ENCODE measurements at regions of chr2 and their contacts with region 1.

Region 1: DNA sequence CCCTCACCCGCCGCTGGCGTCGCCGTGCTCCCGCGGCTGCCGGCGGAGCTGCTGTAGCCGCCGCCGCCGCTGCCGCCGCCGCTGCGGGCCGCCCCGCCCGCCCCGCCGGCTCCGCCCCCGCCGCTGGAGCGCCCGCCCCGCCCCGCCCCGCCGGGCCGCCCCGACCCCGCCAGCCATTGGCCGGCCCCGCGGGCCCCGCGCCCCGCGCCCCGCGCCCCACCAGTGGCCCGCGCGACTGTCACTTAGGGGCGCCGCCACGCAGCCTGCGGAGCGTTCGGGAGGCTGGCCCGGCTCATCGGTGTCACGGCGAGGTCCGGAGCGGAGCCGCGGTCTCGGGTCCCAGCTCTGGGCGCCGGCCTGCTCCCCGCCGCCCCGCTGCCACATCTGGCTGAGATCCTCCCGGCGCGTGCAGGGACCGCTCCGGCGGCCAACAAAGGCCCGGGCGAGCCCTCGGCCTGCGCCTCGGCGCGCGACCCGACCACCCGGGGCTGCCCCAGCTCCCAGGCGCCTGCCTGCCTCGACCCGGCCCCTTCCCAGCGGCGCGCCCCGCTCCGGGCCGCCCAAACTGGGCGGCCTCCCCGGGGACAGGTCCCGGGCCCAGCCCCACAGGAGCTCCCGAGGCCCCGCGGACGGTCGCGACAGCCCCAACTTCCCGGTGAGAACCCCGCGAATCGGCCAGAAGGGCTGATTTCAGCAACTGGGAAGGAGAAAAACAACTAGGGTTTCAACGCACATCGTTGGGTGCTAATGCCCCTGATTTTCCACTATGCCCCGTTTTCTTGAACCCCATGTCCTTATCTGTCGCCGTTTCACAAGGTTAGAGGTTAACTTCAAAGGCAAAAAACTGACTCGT is at the start of gene MGAT4A:
- DNase-seq: peak; percentile 69
- ATAC-seq: peak; percentile 91
- H3K4me3 ChIP-seq: peak within 1 kb of the TSS; percentile 77 to 97 (median 96)
- H3K27ac ChIP-seq: peak within 1 kb of the TSS; percentile 91
- H3K4me1 ChIP-seq: peaks cover 79% of the 10 kb centered on the region
- H3K27me3 ChIP-seq: no peaks in the 10 kb centered on the region; a peak in 1 of 5 replicates
- CTCF ChIP-seq: no peak
- EP300 ChIP-seq: peak in 1 of 2 experiments; percentile 35; a peak in 1 of 4 replicates
- POLR2A ChIP-seq: peak; percentile 79 to 96
- RAD21 ChIP-seq: peak; percentile 69; the same call in 1 of the 2 replicates
- total RNA-seq, gene MGAT4A: 90.9 and 97.6 TPM in 2 replicates

Region 2: DNA sequence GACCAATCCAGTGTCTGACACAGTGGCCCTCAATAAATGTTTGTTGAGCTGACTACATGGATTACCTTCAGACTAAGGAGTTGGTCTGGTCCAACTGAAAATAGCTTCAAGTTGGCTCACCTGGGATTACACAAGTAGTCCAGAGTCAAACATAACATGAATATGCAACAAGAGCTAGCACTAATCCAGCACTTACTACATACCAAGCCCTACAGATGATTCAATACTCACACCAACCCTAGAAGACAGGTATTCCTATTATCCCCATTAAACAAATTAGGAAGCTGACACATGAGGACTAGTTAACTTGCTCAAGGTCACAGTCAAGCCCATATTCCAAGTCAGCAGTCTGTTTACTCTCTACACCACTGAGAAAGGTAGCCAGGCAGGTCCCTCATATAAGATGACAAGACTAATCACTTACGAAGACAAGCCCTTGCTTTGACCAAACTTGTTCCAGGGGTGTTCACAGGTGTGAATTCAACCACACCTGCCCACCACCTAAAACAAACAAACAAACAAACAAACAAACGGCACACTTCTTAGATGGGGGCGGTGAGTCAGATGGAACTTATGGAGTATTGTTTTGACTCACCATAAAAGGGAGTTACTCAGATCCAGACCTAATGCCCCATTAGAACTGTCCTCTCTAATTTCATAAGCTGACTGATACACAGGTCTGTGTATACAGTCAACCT is 764.6 kb before region 1 on chr2:
- CTCF ChIA-PET with region 1: no interaction called
- POLR2A ChIA-PET with region 1: no interaction called
- in situ Hi-C with region 1: no loop called
- intact Hi-C with region 1: no loop called
- DNase-seq: peak; percentile 25
- ATAC-seq: peak; percentile 9; the same call in 1 of the 3 replicates
- H3K4me3 ChIP-seq: no peak overlapping the region
- H3K27ac ChIP-seq: no peak overlapping the region
- H3K4me1 ChIP-seq: peaks cover 55% of the 10 kb centered on the region
- H3K27me3 ChIP-seq: no peaks in the 10 kb centered on the region
- CTCF ChIP-seq: no peak
- EP300 ChIP-seq: no peak
- POLR2A ChIP-seq: no peak
- RAD21 ChIP-seq: no peak

Region 3: DNA sequence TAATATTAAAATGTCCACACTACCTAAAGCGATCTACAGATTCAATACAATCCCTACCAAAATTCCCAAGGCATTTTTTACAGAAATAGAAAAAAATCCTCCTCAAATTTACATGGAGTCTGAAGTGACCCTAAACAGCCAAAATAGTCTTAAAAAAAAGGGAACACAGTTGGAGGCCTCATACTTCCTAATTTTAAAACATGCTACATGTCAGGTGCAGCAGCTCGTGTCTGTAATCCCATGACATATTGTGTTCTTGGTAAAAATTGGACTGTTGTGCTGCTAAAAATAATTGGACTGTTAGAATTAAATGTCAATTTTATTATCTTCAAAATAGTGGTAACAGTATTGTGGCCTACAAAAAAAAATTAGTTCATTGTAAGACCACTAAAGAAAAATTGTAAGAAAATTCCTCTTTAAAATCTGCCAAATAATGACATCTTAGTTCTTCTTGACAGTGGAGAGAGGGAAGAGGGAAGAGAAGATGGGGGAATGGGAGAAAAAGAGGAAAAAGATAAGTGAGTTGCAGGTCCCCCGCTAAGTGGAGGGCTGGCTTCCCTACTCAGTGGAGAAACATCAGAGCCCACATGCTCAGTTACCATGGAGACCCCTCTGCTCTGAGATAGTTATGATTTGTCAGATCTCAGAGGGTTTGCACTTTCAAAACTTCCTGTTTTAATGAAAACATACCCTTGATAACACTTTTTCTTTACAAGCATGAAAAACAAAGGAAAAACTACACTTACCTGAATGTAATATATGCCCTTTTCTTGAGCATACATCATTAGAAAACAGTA is 76.4 kb before region 1 on chr2:
- CTCF ChIA-PET with region 1: no interaction called
- POLR2A ChIA-PET with region 1: no interaction called
- in situ Hi-C with region 1: no loop called
- intact Hi-C with region 1: no loop called
- DNase-seq: no peak
- ATAC-seq: no peak
- H3K4me3 ChIP-seq: no peak overlapping the region
- H3K27ac ChIP-seq: no peak overlapping the region
- H3K4me1 ChIP-seq: peaks cover under 1% of the 10 kb centered on the region; the same call in 1 of the 2 replicates
- H3K27me3 ChIP-seq: no peaks in the 10 kb centered on the region
- CTCF ChIP-seq: no peak
- EP300 ChIP-seq: no peak
- POLR2A ChIP-seq: no peak
- RAD21 ChIP-seq: no peak

Region 4: DNA sequence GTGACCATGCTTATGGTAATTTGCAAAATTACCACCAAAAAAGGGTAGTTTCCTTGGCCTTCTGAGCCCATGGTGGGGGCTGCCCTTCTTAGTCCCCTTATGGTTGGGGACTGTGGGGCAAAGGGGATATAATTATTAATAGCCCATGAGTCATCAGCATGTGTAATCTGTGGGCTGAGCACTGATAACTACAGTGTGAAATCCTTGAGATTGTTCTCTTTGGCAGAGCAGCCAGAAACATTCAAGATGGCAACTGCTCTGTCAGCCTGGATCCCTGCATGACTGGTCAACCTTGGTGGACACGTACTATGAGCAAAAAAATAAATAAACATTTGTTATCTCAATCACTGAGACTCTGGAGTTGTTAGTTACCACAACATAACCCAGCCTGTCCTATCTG is 61.6 kb before region 1 on chr2:
- CTCF ChIA-PET with region 1: no interaction called
- POLR2A ChIA-PET with region 1: no interaction called
- in situ Hi-C with region 1: no loop called
- intact Hi-C with region 1: no loop called
- DNase-seq: no peak
- ATAC-seq: no peak
- H3K4me3 ChIP-seq: no peak overlapping the region
- H3K27ac ChIP-seq: no peak overlapping the region
- H3K4me1 ChIP-seq: no peaks in the 10 kb centered on the region
- H3K27me3 ChIP-seq: no peaks in the 10 kb centered on the region
- CTCF ChIP-seq: no peak
- EP300 ChIP-seq: no peak
- POLR2A ChIP-seq: no peak
- RAD21 ChIP-seq: no peak

Region 5: GRCh38 chr2:98691303-98691702 is 40.0 kb before region 1 on chr2:
- CTCF ChIA-PET with region 1: no interaction called
- POLR2A ChIA-PET with region 1: interaction called, 3 read pairs
- in situ Hi-C with region 1: no loop called
- intact Hi-C with region 1: loop called (anchors 5 kb)
- DNase-seq: peak; percentile 48
- ATAC-seq: peak; percentile 25; the same call in 1 of the 3 replicates
- H3K4me3 ChIP-seq: no peak overlapping the region
- H3K27ac ChIP-seq: no peak overlapping the region
- H3K4me1 ChIP-seq: peaks cover 25% of the 10 kb centered on the region
- H3K27me3 ChIP-seq: no peaks in the 10 kb centered on the region
- CTCF ChIP-seq: no peak
- EP300 ChIP-seq: no peak
- POLR2A ChIP-seq: no peak
- RAD21 ChIP-seq: no peak

Region 6: DNA sequence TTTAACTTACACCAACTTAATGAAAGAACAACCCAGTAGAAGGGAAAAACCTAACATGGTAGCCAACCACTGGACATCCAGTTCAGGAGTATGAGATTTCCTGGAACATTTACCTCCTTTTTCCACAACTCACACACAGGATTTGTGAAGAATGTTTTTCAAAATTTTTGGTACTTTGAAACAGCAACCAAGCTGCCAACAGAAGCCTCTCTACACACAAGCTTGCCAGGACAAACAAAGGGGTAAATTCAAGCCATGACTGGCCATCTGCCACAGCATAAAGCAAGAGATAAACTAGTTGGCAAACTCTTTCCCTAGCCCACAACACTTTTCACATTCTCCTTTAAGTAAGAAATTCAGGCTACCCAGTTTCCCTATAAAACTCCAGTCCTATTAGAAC is 21.7 kb before region 1 on chr2:
- CTCF ChIA-PET with region 1: no interaction called
- POLR2A ChIA-PET with region 1: interaction called, 13 read pairs
- in situ Hi-C with region 1: no loop called
- intact Hi-C with region 1: no loop called
- DNase-seq: no peak
- ATAC-seq: no peak
- H3K4me3 ChIP-seq: no peak overlapping the region
- H3K27ac ChIP-seq: no peak overlapping the region
- H3K4me1 ChIP-seq: peaks cover 23% of the 10 kb centered on the region
- H3K27me3 ChIP-seq: no peaks in the 10 kb centered on the region
- CTCF ChIP-seq: no peak
- EP300 ChIP-seq: no peak
- POLR2A ChIP-seq: no peak
- RAD21 ChIP-seq: no peak

Region 7: GRCh38 chr2:98787700-98788099 is 56.4 kb after region 1 on chr2:
- CTCF ChIA-PET with region 1: no interaction called
- POLR2A ChIA-PET with region 1: interaction called, 11 read pairs
- in situ Hi-C with region 1: no loop called
- intact Hi-C with region 1: no loop called
- DNase-seq: no peak
- ATAC-seq: peak; percentile 32
- H3K4me3 ChIP-seq: no peak overlapping the region
- H3K27ac ChIP-seq: no peak overlapping the region
- H3K4me1 ChIP-seq: peaks cover 22% of the 10 kb centered on the region
- H3K27me3 ChIP-seq: no peaks in the 10 kb centered on the region
- CTCF ChIP-seq: no peak
- EP300 ChIP-seq: no peak
- POLR2A ChIP-seq: no peak
- RAD21 ChIP-seq: no peak

Region 8: GRCh38 chr2:98805412-98806171 is 74.3 kb after region 1 on chr2:
- CTCF ChIA-PET with region 1: no interaction called
- POLR2A ChIA-PET with region 1: interaction called, 35 read pairs
- in situ Hi-C with region 1: no loop called
- intact Hi-C with region 1: no loop called
- DNase-seq: peak; percentile 83
- ATAC-seq: peak; percentile 69
- H3K4me3 ChIP-seq: no peak overlapping the region
- H3K27ac ChIP-seq: peak overlapping the region; percentile 36
- H3K4me1 ChIP-seq: peaks cover 69% of the 10 kb centered on the region
- H3K27me3 ChIP-seq: no peaks in the 10 kb centered on the region
- CTCF ChIP-seq: no peak
- EP300 ChIP-seq: peak in 1 of 2 experiments; percentile 80; a peak in 2 of 4 replicates
- POLR2A ChIP-seq: no peak
- RAD21 ChIP-seq: peak; percentile 20; the same call in 1 of the 2 replicates

Region 9: GRCh38 chr2:98835831-98836385 is 104.6 kb after region 1 on chr2:
- CTCF ChIA-PET with region 1: interaction called, 5 read pairs
- POLR2A ChIA-PET with region 1: interaction called, 12 read pairs
- in situ Hi-C with region 1: loop called (anchors 5 kb)
- intact Hi-C with region 1: loop called (anchors 2 kb)
- DNase-seq: no peak
- ATAC-seq: peak; percentile 43
- H3K4me3 ChIP-seq: no peak overlapping the region
- H3K27ac ChIP-seq: no peak overlapping the region
- H3K4me1 ChIP-seq: peaks cover 45% of the 10 kb centered on the region
- H3K27me3 ChIP-seq: no peaks in the 10 kb centered on the region
- CTCF ChIP-seq: no peak
- EP300 ChIP-seq: no peak
- POLR2A ChIP-seq: no peak
- RAD21 ChIP-seq: no peak

Measured in HepG2 (cell line).